WTC11 (cell line): ENCODE measurements at regions of chr22 and their contacts with region 1.

Region 1: DNA sequence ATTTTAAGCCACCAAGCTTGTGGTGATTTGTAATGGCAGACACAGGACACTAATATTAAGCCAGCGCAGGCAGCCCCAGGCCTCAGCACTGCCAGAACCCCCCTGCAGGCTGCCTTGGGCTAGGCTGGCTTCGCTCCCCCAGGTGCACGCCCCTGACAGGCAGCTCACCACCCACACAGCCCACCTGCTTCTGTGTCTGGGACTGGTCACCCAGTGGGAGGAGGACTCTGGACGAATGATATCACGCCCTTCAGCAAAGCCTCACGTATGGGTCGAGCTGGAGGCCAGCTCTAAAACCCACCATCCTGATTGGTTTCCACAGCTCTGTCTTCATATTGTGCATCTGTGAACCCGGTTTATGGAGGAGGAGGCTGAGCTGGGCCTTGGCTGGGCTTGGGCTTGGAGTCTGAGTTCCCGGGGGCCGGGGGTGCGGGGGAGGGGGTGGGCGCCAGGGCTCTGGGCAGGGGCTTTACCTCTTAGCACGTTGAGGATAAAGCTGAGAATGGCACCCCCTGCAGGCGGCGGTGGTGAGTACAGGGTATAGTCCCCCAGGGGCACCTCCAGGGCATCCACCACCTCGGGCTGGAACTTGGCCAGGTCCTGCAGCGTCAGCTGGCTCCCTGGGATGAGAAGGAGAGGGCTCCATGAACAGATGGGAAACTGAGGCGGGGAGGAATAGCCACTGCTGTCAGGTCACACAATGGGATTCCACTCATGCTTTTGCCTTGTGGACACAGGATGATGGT is 13.8 kb downstream of the GGT5 start:
- DNase-seq: peak; percentile 93
- ATAC-seq: peak; percentile 98
- H3K4me3 Mint-ChIP-seq: no peak overlapping the region
- H3K27ac Mint-ChIP-seq: no peak overlapping the region
- H3K4me1 Mint-ChIP-seq: peaks cover 3% of the 10 kb centered on the region
- H3K27me3 Mint-ChIP-seq: no peaks in the 10 kb centered on the region
- CTCF ChIP-seq: peak; percentile 78

Region 2: DNA sequence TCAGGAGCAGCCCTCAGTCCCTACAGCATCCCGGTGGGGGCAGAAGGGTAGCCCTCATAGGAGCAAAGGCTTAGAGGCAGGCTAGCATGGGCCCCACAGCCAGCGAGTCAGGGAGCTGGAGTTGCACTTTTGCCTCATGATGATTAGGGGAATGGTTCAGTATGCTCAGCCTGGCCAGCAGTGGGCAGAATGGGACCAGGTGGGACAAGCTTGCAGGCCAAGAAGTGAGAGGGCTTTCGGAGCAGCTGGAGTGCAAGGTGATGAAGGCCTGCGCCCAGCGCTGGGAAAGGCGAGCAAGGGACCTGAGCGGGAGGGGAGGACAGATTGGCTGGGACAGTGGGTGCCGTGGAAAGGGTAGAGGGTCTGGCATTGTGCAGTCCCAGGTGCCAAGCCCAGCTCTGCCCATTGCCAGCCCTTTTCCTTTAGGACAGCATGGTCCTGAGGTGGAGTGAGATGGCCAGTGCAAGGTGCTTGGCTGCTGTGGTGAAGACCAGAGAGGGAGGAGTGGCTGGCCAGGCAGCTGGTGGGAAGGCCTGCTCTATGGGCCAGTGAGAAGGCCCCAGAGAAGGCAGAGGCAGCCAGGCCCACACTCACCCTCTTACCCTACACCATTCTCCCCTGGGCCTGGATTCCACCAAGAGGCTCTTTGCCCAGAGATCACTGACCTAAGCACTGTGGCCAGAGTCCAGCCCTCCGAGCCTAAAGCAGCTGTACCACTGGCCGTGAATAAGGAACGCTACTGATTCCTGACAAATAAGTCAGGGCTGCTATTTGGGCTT is 97.7 kb before region 1 on chr22:
- CTCF ChIA-PET with region 1: interaction called, 11 read pairs
- POLR2A ChIA-PET with region 1: no interaction called
- DNase-seq: peak; percentile 42
- ATAC-seq: peak; percentile 74
- H3K4me3 Mint-ChIP-seq: no peak overlapping the region
- H3K27ac Mint-ChIP-seq: peak overlapping the region; percentile 80; the same call in 1 of the 2 replicates
- H3K4me1 Mint-ChIP-seq: peaks cover 4% of the 10 kb centered on the region; the same call in 1 of the 2 replicates
- H3K27me3 Mint-ChIP-seq: no peaks in the 10 kb centered on the region
- CTCF ChIP-seq: no peak

Region 3: GRCh38 chr22:24175160-24175808 is 55.8 kb before region 1 on chr22:
- CTCF ChIA-PET with region 1: interaction called, 29 read pairs
- POLR2A ChIA-PET with region 1: no interaction called
- DNase-seq: peak; percentile 91
- ATAC-seq: peak; percentile 85
- H3K4me3 Mint-ChIP-seq: no peak overlapping the region
- H3K27ac Mint-ChIP-seq: no peak overlapping the region
- H3K4me1 Mint-ChIP-seq: no peaks in the 10 kb centered on the region
- H3K27me3 Mint-ChIP-seq: no peaks in the 10 kb centered on the region
- CTCF ChIP-seq: peak; percentile 90

Region 4: DNA sequence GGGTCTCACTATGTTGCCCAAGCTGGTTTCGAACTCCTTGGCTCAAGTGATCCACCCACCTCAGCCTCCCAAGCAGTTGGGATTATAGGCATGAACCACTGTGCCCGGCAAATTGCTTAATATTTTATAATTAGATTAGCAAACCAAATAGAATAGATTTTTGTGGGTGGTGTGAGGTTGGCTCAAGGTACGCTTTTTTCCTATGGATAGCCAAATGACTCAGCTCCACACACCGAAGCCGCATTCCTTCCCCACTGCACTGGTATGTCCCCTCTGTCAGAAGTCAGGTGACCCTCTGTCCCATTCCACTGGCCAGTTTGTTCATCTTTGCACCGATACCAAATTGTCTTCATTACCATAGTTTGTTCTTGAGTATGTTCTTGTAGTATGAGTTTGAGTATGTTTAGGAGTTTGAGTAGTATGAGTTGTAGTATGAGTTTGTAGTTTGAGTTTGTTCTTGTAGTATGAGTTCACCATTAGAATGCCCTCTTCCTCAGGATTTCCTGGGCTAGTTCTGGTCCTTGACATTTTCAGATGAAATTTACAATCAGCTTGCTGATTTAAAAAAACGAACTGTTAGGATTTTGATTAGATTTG is 30.4 kb before region 1 on chr22:
- CTCF ChIA-PET with region 1: interaction called, 17 read pairs
- POLR2A ChIA-PET with region 1: no interaction called
- DNase-seq: no peak
- ATAC-seq: no peak
- H3K4me3 Mint-ChIP-seq: no peak overlapping the region
- H3K27ac Mint-ChIP-seq: no peak overlapping the region
- H3K4me1 Mint-ChIP-seq: peaks cover 12% of the 10 kb centered on the region; the same call in 1 of the 2 replicates
- H3K27me3 Mint-ChIP-seq: peaks cover 4% of the 10 kb centered on the region; the same call in 1 of the 2 replicates
- CTCF ChIP-seq: no peak

Region 5: GRCh38 chr22:24219750-24220149 is 11.3 kb before region 1 on chr22:
- CTCF ChIA-PET with region 1: interaction called, 35 read pairs
- POLR2A ChIA-PET with region 1: no interaction called
- DNase-seq: no peak
- ATAC-seq: no peak
- H3K4me3 Mint-ChIP-seq: no peak overlapping the region
- H3K27ac Mint-ChIP-seq: no peak overlapping the region
- H3K4me1 Mint-ChIP-seq: no peaks in the 10 kb centered on the region
- H3K27me3 Mint-ChIP-seq: no peaks in the 10 kb centered on the region
- CTCF ChIP-seq: no peak

Region 6: DNA sequence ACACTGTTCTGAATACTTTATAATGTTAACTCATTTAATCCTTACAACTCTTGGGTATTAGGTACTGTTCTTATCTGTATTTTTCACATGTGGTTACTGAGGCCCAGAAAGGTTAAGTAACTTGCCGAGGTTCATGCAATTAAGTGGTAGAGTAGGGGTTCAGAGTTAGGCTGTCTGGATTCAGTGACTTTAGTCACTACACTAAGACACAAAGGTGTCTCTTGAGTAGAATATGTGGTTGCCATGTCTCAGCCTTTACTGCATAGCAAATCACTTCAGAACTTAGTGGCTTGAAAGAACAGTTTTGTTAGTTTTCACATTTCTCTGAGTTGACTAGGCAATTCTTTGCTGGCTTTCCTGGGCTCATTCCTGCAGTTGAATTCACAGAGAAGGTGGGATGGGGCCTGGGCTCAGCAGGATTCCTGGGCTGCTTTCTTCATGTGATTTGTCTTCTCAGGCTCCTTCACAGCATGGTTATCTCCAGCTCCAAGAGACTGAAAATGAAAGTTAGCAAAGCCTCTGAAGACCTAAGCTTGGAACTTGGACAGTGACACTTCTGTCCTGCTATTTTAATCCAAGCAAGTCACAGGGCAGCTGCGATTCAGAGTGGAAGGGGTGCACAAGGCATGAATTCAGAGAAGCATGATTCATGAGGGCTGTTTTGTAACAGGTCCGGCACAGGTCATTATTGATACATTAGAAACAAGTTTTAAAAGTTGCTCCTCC is 107.8 kb after region 1 on chr22:
- CTCF ChIA-PET with region 1: no interaction called
- POLR2A ChIA-PET with region 1: no interaction called
- DNase-seq: no peak
- ATAC-seq: peak; percentile 60; the same call in 1 of the 2 replicates
- H3K4me3 Mint-ChIP-seq: no peak overlapping the region
- H3K27ac Mint-ChIP-seq: peak overlapping the region; percentile 93
- H3K4me1 Mint-ChIP-seq: peaks cover 47% of the 10 kb centered on the region
- H3K27me3 Mint-ChIP-seq: no peaks in the 10 kb centered on the region
- CTCF ChIP-seq: no peak